ENCODE measurements at regions of chr3 and their contacts with region 1.

Region 1: GRCh38 chr3:126461450-126462070 is 14.1 kb downstream of the ZXDC start:
- DNase-seq: no peak
- H3K4me3 ChIP-seq: no peak overlapping the region
- H3K27ac ChIP-seq: no peak overlapping the region
- H3K4me1 ChIP-seq: no peaks in the 10 kb centered on the region
- H3K27me3 ChIP-seq: no peaks in the 10 kb centered on the region

Region 2: GRCh38 chr3:126475413-126476114 is 14.0 kb after region 1 on chr3 and contains the start of gene ZXDC:
- CTCF ChIA-PET with region 1: interaction called, 14 read pairs
- POLR2A ChIA-PET with region 1: no interaction called
- DNase-seq: peak; percentile 88 to 92 (median 92)
- H3K4me3 ChIP-seq: peak within 1 kb of the TSS; percentile 54 to 89 (median 77)
- H3K27ac ChIP-seq: peak within 1 kb of the TSS; percentile 50 to 73
- H3K4me1 ChIP-seq: peaks cover 25 to 44% (median 43%) of the 10 kb centered on the region in 4 experiments
- H3K27me3 ChIP-seq: no peaks in the 10 kb centered on the region

Region 3: GRCh38 chr3:126498929-126499328 is 37.4 kb after region 1 on chr3:
- CTCF ChIA-PET with region 1: no interaction called
- POLR2A ChIA-PET with region 1: no interaction called
- DNase-seq: no peak
- H3K4me3 ChIP-seq: no peak overlapping the region
- H3K27ac ChIP-seq: no peak overlapping the region
- H3K4me1 ChIP-seq: peaks cover 0 to 24% (median 15%) of the 10 kb centered on the region in 4 experiments
- H3K27me3 ChIP-seq: no peaks in the 10 kb centered on the region